Activated T-helper 1 cell treated with anti-CD3 and anti-CD28 coated beads, Interleukin-12 subunit alpha, Interleukin-12 subunit beta, Interleukin-2, Interleukin-4 antibody, amounts not matched to agents 30 ng/mL and 10 ng/mL and 1 ng/mL, durations not matched to agents 14 hours and 24 hours and 36 hours (primary cell): ENCODE measurements at regions of chr10 and their contacts with region 1.

Region 1: DNA sequence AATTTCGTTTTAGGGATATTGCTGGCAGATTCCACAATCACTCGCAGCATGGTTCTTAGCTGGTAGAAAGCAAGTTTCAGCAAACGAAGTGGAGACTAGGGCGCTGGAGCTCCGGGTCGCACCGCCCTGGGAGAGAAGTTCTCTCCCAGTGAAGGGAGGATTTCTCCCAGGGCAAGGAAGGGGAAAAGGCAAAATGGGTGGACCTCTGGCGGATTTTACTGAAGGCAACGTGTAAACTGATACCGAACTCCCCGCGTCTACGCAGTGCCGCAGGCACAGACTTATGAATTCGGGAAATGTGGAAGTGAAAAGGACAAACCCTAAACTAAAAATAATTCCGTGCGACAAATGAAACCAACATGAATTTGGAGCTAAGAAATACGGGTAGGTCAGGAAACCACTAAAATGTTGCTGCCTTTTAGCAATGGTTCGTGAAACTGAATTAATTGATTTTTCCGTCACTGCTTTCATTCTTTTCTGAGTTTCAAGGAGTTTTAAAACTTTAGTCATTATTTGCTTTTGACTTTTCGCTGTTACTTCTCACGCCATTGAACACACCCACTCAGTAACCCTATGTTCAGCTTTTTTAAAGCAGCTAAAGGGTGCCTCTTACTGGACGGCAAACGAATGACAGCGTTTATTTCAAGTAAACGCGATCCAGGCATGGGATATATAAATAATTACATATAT is at the start of gene MYOF:
- DNase-seq: peak; percentile 35
- H3K4me3 Mint-ChIP-seq: peak within 1 kb of the TSS; percentile 96
- H3K27ac Mint-ChIP-seq: peak within 1 kb of the TSS; percentile 93
- H3K4me1 Mint-ChIP-seq: peaks cover 19% of the 10 kb centered on the region
- H3K27me3 Mint-ChIP-seq: peaks cover 3% of the 10 kb centered on the region
- total RNA-seq, gene MYOF: 13.4 and 13.7 TPM in 2 replicates

Region 2: DNA sequence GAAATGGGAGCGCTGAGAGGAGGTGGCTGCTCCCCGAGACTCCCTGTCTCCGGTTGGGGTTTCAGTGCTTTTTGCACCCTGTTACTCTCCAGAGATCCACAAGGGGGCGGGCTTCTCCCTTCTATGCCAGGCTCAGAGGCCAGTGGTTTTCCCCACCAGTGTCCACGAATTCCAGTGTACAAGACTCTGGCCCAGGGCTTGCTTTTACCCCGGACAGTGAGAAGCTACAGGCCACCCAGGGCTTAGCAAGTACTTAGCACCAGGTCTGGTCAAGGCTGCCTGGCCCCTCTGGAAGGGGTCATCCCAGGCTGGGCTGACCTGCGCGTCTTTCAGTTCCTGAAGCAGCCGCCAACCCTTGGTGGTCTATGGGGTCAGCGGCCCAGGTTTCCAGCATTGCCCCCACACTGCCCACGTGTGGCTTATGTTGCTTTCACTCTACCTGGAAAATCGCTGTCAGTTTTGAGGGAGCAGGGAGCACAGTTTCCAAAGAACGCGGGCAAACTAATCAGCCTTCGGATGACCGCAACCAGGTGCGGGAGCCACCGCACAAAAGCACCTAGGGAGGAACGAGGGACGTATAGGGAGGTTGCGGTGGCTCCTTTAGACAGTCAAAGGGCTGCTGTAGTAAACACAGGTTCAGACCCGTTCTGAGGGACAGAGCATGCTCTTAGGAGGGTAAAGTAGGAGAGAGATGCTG is 401.8 kb before region 1 on chr10:
- intact Hi-C with region 1: loop called (anchors 1 kb)
- DNase-seq: peak; percentile 23
- H3K4me3 Mint-ChIP-seq: no peak overlapping the region
- H3K27ac Mint-ChIP-seq: no peak overlapping the region
- H3K4me1 Mint-ChIP-seq: peaks cover 5% of the 10 kb centered on the region
- H3K27me3 Mint-ChIP-seq: peaks cover 49% of the 10 kb centered on the region

Region 3: DNA sequence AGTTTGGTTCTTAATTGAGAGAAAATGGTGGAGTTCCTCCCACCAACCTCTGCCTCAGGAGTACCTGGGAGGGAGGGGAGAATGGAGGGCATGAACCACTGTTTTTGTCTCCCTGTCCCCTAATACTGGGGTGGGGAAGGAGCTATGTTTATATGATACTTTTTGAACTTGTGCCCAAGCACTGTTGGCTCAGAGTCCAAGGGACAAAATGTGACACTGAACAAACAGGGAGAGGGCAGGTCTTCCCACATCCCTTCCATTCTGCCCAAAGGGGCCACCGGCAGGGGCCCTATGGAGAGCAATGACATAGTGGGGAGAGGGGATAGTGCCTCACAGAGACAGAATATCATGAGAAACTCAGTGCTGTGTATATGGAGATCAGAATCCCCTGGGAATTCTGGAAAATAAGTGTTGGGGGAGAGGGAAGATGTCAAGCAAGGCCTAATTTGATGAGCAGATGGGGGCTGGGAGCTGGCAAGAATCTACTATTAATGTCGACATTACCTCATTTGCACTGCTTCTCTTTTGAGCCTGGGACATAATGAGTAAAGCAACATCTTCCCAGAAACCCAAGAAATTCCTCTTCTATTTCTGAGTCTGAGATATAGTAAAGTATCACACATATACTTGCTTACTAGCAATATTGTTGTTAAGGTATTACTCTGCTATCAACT is 228.0 kb before region 1 on chr10:
- intact Hi-C with region 1: no loop called
- DNase-seq: no peak
- H3K4me3 Mint-ChIP-seq: no peak overlapping the region
- H3K27ac Mint-ChIP-seq: no peak overlapping the region
- H3K4me1 Mint-ChIP-seq: no peaks in the 10 kb centered on the region
- H3K27me3 Mint-ChIP-seq: peaks cover 2% of the 10 kb centered on the region

Region 4: DNA sequence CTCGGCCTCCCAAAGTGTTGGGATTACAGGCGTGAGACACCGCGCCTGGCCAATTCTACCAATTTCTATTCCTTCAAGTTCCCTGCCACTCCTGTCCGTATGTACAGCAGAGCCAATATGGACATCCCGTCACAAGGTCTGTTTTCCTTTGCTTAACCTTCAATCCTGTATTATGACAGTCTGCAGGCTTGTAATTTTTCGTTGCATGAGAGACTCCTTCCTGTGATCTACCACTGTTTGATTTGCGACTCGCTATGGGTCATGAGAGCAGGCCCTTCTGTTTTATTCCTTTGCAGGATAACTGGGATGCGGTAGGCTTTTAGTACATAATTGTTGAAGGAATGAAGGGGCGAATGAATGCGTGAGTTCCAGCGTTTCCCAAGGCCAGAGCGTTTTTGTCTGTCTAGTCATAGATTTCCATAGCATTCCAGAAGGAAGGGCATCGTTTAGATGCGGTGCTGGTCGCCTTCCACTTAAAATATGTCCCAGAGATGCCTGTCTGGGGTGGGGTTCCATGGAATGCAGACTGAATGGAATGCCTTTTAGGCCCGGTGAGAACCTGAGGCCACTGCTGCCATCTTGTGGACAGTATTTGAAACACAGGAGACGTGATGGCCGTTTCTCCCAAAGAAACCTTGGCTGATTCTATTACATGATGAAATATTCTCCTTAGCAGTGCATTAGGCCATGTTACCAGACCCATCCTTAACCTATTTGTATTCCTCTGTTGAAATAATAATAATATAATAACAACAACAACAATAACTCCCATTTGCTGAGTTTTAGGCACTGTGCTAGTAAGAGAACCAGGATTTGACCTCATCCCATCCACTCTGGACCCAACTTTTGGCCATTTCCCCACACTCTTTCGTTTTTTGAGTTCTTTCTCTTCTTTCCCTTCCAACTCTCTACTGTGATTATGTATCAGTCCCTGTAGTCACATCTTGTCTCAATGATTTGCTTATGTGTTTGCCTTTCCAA is 193.3 kb before region 1 on chr10:
- intact Hi-C with region 1: loop called (anchors 1 kb)
- DNase-seq: peak; percentile 17
- H3K4me3 Mint-ChIP-seq: no peak overlapping the region
- H3K27ac Mint-ChIP-seq: no peak overlapping the region
- H3K4me1 Mint-ChIP-seq: no peaks in the 10 kb centered on the region
- H3K27me3 Mint-ChIP-seq: peaks cover 6% of the 10 kb centered on the region

Region 5: DNA sequence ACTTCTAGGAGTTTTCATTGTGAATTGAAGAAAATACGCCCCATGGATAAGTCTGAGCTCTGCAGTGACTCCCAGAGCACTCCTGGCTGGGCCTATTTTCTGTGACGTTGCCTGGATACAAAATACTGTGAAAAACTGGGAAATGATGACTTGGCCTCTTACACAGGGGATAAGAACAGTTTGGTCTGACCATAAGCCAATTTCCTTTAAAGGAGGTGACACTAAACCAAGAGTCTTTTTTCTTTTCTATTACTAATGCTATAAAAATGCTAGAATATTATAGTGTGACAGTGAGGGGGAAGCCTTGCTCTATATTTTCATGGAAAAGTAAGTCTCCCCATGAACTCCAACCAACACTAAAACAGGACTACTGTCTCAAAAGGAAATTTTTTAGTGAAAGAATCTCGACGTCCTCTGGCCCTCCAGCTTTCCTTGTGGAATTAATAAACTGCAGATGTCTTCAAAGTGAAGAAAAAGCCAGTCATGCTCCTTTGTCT is 45.7 kb before region 1 on chr10:
- intact Hi-C with region 1: no loop called
- DNase-seq: no peak
- H3K4me3 Mint-ChIP-seq: no peak overlapping the region
- H3K27ac Mint-ChIP-seq: no peak overlapping the region
- H3K4me1 Mint-ChIP-seq: no peaks in the 10 kb centered on the region
- H3K27me3 Mint-ChIP-seq: no peaks in the 10 kb centered on the region

Region 6: GRCh38 chr10:93496322-93497041 is 14.2 kb after region 1 on chr10 and contains the start of gene CEP55:
- intact Hi-C with region 1: loop called (anchors 1 kb)
- DNase-seq: peak; percentile 96
- H3K4me3 Mint-ChIP-seq: peak within 1 kb of the TSS; percentile 88
- H3K27ac Mint-ChIP-seq: peak within 1 kb of the TSS; percentile 95
- H3K4me1 Mint-ChIP-seq: peaks cover 46% of the 10 kb centered on the region
- H3K27me3 Mint-ChIP-seq: no peaks in the 10 kb centered on the region
- total RNA-seq, gene CEP55: 53.0 and 55.7 TPM in 2 replicates